Activated CD4-positive, alpha-beta memory T cell treated with anti-CD3 and anti-CD28 coated beads, Interleukin-2, amount 10 ng/mL, durations not matched to agents 7 days and 5 days (primary cell): ENCODE measurements at regions of chr13 and their contacts with region 1.

Region 1: DNA sequence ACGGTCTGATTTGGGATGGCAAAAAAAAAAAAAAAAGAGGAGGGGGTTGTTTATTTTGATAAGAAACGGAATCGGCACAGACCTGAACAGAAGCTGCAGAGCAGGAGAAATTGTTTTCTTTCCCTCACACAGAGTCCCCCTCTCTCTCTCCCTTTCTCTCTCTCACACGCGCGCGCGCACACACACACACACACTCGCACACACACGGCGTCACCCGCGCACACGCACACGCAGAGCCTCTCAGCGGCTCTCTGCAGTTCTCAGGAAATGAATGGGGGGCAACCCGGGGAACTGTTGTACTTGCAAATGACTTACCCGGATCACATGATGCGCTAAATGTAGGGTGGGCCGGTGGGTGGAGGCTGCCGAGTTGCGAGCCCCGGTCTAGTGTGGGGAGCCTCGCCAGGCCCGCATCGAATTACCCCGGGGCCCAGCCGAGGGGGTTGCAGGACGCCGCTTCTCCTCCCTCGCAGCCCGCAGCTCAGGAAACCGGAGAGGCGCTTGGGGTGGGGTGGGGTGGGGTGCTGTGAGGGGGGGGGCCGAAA is 475 bp downstream of the KLF12 start:
- DNase-seq: peak; percentile 89
- H3K4me3 Mint-ChIP-seq: peak overlapping the region; percentile 97
- H3K27ac Mint-ChIP-seq: peak overlapping the region; percentile 100
- H3K4me1 Mint-ChIP-seq: peaks cover 35% of the 10 kb centered on the region
- H3K27me3 Mint-ChIP-seq: no peaks in the 10 kb centered on the region

Region 2: DNA sequence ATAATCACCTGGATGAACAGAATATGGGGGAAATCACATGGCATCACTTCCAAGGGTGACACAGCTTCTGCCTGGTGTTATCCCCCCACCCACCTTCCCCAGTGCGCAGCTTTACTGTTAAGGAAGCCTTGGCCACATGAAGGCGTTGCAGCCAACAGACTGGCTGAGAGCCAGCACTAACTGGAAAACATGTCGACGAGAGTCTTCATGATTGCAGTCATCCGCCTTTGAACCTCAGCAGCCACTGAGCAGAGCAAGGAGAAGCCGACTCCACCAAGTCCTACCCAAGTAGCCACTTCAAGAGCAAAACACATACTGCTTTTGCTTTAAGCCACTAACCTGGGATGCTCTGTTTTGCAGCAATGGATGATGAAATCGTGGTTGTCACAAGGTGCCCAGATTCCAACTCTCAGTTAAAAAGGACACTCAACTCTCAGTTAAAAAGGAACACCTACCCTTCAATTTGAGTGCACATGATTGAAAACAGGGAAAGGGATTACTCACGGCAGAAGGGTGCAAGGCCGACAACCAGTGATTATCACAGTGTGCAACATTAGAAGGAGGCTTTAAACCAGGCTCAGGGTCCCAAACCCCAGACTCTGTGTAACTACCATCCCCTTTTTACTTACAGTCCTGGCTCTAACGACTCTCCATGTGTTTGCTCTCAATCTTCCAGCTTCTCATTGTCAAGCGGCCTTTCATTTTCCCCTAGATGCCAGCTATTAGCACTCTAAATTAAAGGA is 148.6 kb before region 1 on chr13:
- CTCF ChIA-PET with region 1: no interaction called
- POLR2A ChIA-PET with region 1: interaction called, 38 read pairs
- DNase-seq: peak; percentile 48
- H3K4me3 Mint-ChIP-seq: no peak overlapping the region
- H3K27ac Mint-ChIP-seq: peak overlapping the region; percentile 62
- H3K4me1 Mint-ChIP-seq: peaks cover 28% of the 10 kb centered on the region
- H3K27me3 Mint-ChIP-seq: no peaks in the 10 kb centered on the region

Region 3: DNA sequence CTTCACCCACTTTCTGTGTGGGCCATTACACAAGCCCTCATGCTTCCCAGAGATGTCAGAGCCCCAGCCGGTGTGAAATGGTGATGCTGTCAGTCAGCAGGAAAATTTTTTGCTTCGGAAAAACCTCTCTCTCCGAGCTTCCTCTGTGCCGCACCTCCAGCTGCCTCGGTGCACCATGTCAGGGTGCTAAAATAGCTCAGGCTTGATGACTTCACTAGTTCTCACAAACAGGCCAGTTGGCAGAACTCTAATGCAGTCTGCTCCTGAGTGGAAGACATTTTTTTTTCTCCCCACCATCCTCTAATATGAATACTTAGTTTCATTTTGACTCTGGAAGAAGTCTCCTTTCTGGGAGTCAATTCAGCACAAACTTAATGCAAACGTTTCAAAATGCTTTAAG is 70.8 kb before region 1 on chr13:
- CTCF ChIA-PET with region 1: interaction called, 8 read pairs
- POLR2A ChIA-PET with region 1: interaction called, 146 read pairs
- DNase-seq: peak; percentile 60
- H3K4me3 Mint-ChIP-seq: peak overlapping the region; percentile 74
- H3K27ac Mint-ChIP-seq: peak overlapping the region; percentile 88
- H3K4me1 Mint-ChIP-seq: peaks cover 75% of the 10 kb centered on the region
- H3K27me3 Mint-ChIP-seq: no peaks in the 10 kb centered on the region

Region 4: GRCh38 chr13:74090869-74091605 is 42.7 kb before region 1 on chr13:
- CTCF ChIA-PET with region 1: no interaction called
- POLR2A ChIA-PET with region 1: interaction called, 14 read pairs
- DNase-seq: no peak
- H3K4me3 Mint-ChIP-seq: peak overlapping the region; percentile 34
- H3K27ac Mint-ChIP-seq: peak overlapping the region; percentile 55
- H3K4me1 Mint-ChIP-seq: peaks cover 40% of the 10 kb centered on the region
- H3K27me3 Mint-ChIP-seq: no peaks in the 10 kb centered on the region

Region 5: DNA sequence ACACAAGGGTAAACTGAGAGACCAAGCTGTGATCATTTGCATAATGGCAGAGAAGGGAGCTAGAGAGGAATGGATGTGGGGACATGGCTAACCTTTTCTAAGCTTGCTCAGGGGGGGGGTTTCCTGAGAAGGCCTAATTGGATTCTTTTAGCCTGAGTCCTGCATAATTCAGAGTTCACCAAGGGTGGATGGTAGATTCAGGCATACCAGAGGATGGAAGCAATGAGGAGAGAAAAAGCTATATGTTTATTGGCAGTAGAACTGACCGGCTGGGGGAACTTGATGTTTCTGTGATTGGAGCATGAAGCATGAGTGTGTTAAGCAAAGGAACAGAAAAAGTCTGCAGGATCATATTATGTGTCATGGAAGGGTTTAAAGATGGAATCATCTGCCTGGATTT is 66.4 kb after region 1 on chr13:
- CTCF ChIA-PET with region 1: no interaction called
- POLR2A ChIA-PET with region 1: no interaction called
- DNase-seq: no peak
- H3K4me3 Mint-ChIP-seq: no peak overlapping the region
- H3K27ac Mint-ChIP-seq: no peak overlapping the region
- H3K4me1 Mint-ChIP-seq: no peaks in the 10 kb centered on the region
- H3K27me3 Mint-ChIP-seq: peaks cover 3% of the 10 kb centered on the region

Region 6: DNA sequence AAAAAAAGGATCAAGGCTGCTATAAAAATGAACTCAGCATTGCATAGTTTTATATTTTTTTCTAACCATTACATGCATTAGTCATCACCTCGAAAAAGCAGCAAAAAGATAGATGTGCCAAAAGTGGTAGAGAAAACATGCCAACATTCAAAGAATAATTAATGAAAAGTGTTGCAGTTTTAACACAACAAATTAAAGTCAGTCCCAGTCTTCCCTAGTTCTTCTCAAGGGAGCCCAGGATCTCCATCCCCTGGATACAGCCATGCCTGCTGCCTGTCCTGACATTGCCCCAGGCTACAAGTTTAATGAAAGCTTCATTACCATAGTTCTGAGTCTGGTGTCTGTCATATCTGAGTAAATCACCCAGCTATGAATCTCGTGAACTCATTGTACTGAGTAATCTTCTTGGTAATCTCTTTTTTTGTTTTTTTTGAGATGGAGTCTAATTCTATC is 117.0 kb after region 1 on chr13:
- CTCF ChIA-PET with region 1: no interaction called
- POLR2A ChIA-PET with region 1: interaction called, 13 read pairs
- DNase-seq: no peak
- H3K4me3 Mint-ChIP-seq: no peak overlapping the region
- H3K27ac Mint-ChIP-seq: no peak overlapping the region
- H3K4me1 Mint-ChIP-seq: peaks cover 40% of the 10 kb centered on the region
- H3K27me3 Mint-ChIP-seq: peaks cover 13% of the 10 kb centered on the region